ENCODE measurements at regions of chr5 and their contacts with region 1.

Region 1: DNA sequence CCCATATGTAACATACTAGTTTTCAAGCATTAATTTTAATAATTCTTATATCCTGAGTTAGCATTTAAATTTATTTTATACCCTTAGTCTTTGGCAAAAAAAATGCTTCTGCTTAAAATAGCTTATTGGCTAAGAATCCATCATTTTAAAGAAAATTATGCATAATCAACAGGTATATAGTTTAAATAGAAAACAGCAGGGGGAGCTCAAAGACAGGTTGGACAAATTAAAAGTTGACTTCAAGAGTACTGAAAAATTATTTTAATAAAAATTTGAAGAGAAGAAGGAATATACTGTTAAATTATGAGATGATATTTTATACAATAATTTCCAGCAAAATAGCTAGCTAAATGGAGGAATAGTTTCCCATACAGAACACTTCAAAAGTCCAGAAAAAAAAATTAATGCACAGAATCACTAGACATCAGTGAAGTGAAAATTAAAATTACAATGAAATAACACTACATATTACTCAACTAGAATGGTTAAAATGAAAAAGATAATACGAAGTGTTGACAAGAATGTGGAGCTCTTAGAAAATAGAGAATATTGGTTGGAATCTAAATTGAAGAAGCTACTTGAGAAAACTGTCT is 387.1 kb downstream of the PDE4D start:
- DNase-seq: no peak
- ATAC-seq: no peak

Region 2: DNA sequence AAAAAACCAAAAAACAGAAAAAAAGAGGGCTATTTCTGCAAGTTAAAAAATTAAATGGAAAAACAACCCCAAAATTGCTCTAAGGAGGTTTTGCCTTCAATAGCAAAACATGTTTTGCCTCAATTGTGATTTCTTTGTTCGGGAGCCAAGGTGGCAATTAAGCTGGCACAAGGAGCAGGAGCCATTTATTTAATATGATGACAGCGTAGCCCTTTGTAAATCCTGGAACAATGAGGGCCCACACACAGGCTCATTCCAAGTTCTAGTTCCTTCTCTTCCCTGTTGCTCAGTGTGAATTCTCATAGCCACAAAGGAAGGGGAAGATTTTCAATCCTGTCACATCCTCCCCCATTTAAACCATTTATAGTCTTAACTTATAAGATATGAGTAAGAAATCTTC is 34.0 kb after region 1 on chr5:
- intact Hi-C with region 1: no loop called
- DNase-seq: no peak
- ATAC-seq: no peak

Region 3: GRCh38 chr5:59673438-59674058 is 167.2 kb after region 1 on chr5:
- intact Hi-C with region 1: loop called (anchors 2 kb)
- DNase-seq: no peak
- ATAC-seq: no peak

Measured in Right ventricle myocardium superior (tissue), 1 donor.